ENCODE measurements at regions of chr4 and their contacts with region 1.

Region 1: GRCh38 chr4:102610007-102610406 is 108.8 kb downstream of the NFKB1 start:
- DNase-seq: no peak
- ATAC-seq: no peak
- H3K4me3 ChIP-seq: no peak overlapping the region
- H3K27ac ChIP-seq: no peak overlapping the region
- H3K4me1 ChIP-seq: no peaks in the 10 kb centered on the region
- H3K27me3 ChIP-seq: no peaks in the 10 kb centered on the region

Region 2: DNA sequence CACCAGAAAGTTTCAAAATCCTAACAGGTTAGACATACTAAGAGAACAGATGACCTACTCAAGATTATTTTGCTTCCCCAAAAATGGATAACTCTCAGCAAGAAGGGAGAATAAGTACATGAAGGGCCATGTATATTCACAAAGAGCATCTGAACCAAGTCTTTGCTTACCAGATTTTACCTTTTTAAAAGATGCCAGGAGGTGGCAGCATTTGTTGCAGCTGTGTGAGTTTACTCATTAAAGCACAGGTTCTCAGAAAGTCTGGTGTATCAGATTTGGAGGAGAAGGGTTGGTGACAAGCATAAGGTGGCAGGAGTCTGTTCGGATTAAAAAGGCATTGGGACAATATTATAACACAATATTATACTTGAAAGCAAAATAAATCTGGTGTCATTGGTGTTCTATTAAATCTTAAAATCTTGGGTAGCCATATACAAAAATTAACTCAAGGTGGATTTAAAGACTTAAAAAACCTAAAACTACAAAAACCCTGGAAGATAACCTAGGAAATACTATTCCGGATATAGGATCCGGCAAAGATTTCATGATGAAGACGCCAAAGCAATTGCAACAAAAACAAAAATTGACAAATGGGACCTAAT is 160.2 kb before region 1 on chr4:
- intact Hi-C with region 1: loop called in 1 of 2 experiments (anchors 10 kb)
- DNase-seq: no peak
- ATAC-seq: peak; percentile 54
- H3K4me3 ChIP-seq: no peak overlapping the region
- H3K27ac ChIP-seq: no peak overlapping the region
- H3K4me1 ChIP-seq: no peaks in the 10 kb centered on the region
- H3K27me3 ChIP-seq: no peaks in the 10 kb centered on the region

Region 3: DNA sequence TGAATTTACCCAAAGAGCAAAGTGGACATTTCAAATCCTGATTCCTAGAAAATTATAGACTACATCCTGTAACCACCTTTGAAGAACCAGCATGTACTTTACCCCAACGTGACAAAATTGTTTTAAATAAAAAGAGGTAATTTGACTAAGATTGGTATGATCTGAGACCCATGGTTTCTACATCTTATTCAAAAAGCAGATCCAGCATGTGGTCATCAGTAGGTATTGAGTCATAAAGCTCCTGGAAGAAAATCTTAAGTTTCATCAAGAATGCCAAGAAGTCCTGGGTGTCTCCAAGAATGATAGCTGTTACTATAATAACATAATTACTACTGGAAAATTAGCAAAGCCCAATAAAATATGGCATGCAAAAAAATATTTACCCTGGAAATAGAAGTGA is 47.0 kb before region 1 on chr4:
- intact Hi-C with region 1: loop called in 1 of 2 experiments (anchors 2 kb)
- DNase-seq: no peak
- ATAC-seq: no peak
- H3K4me3 ChIP-seq: no peak overlapping the region
- H3K27ac ChIP-seq: no peak overlapping the region
- H3K4me1 ChIP-seq: peaks cover 0 to 4% of the 10 kb centered on the region in 2 donors
- H3K27me3 ChIP-seq: no peaks in the 10 kb centered on the region

Region 4: GRCh38 chr4:102713096-102713495 is 103.1 kb after region 1 on chr4:
- intact Hi-C with region 1: no loop called
- DNase-seq: no peak
- ATAC-seq: no peak
- H3K4me3 ChIP-seq: no peak overlapping the region
- H3K27ac ChIP-seq: no peak overlapping the region
- H3K4me1 ChIP-seq: no peaks in the 10 kb centered on the region
- H3K27me3 ChIP-seq: no peaks in the 10 kb centered on the region

Measured in aorta (tissue), 5 donors.